Ovary (tissue), 10 donors: ENCODE measurements at regions of chr5 and their contacts with region 1.

Region 1: GRCh38 chr5:158701406-158702177 is 398.1 kb downstream of the EBF1 start:
- DNase-seq: peak in 1 of 5 donors; percentile 39
- H3K4me3 ChIP-seq: no peak overlapping the region
- H3K27ac ChIP-seq: no peak overlapping the region
- H3K4me1 ChIP-seq: peaks cover 3% of the 10 kb centered on the region
- H3K27me3 ChIP-seq: no peaks in the 10 kb centered on the region
- CTCF ChIP-seq: no peak
- EP300 ChIP-seq: no peak
- POLR2A ChIP-seq: no peak

Region 2: GRCh38 chr5:157820593-157821252 is 880.9 kb before region 1 on chr5:
- intact Hi-C with region 1: loop called in 1 of 4 experiments (anchors 10 kb)
- DNase-seq: peak in 1 of 5 donors; percentile 28
- H3K4me3 ChIP-seq: no peak overlapping the region
- H3K27ac ChIP-seq: peak overlapping the region in 1 of 2 donors; percentile 4
- H3K4me1 ChIP-seq: peaks cover 8% of the 10 kb centered on the region
- H3K27me3 ChIP-seq: no peaks in the 10 kb centered on the region
- CTCF ChIP-seq: peak; percentile 21 to 61 (median 43)
- EP300 ChIP-seq: no peak
- POLR2A ChIP-seq: no peak

Region 3: GRCh38 chr5:158074992-158075769 is 626.4 kb before region 1 on chr5:
- intact Hi-C with region 1: loop called in 1 of 4 experiments (anchors 10 kb)
- DNase-seq: peak; percentile 47 to 77 (median 69)
- H3K4me3 ChIP-seq: peak overlapping the region; percentile 32
- H3K27ac ChIP-seq: no peak overlapping the region
- H3K4me1 ChIP-seq: peaks cover 4% of the 10 kb centered on the region
- H3K27me3 ChIP-seq: no peaks in the 10 kb centered on the region
- CTCF ChIP-seq: peak; percentile 43 to 69 (median 65)
- EP300 ChIP-seq: no peak
- POLR2A ChIP-seq: no peak

Region 4: DNA sequence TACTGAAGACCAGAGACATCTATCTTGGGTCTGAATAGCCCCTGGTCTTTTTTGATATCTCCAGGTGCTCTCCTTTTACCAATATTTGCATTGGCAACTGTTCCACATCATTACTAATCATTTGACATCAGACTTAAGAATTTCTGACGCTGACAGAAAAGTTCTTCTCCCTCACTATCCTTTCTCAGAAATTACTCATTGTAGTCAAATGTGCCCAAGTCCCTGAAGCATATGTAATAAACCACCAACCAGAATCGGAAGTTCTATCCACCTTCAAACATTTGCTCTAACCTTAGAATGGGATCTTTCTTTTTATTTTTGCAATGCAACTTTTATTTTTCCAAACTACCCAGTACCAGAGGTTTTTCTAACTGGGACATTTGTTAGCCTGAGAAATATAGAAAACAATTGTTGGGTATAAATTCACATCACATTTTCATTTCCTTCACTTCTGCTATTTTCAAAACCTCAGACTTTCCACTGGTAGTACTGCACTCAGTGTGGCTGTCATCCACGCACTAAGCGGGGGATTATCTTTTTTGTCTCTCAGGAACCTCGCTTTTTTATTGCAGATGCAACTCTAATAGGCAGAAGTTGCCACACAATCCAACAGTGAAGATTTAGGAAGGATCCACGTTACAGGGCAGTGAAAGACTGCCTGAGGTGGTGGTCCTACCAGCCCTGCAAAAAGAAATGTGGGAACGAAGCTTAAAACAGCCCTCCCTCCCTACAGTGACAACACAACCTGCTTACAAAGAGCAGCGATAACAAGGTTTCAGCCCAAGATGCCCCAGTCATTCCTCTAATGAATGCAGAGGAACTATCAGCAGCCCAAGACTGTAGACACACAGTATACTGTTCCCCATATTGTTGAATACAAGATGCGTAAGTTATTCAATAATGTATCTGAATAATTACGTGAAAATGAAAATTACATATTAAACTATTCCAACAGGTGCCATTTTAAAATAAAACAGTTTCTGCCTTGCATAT is 196.9 kb after region 1 on chr5:
- intact Hi-C with region 1: loop called in 1 of 4 experiments (anchors 10 kb)
- DNase-seq: no peak
- H3K4me3 ChIP-seq: no peak overlapping the region
- H3K27ac ChIP-seq: no peak overlapping the region
- H3K4me1 ChIP-seq: peaks cover 10% of the 10 kb centered on the region
- H3K27me3 ChIP-seq: no peaks in the 10 kb centered on the region
- CTCF ChIP-seq: no peak
- EP300 ChIP-seq: no peak
- POLR2A ChIP-seq: no peak

Region 5: DNA sequence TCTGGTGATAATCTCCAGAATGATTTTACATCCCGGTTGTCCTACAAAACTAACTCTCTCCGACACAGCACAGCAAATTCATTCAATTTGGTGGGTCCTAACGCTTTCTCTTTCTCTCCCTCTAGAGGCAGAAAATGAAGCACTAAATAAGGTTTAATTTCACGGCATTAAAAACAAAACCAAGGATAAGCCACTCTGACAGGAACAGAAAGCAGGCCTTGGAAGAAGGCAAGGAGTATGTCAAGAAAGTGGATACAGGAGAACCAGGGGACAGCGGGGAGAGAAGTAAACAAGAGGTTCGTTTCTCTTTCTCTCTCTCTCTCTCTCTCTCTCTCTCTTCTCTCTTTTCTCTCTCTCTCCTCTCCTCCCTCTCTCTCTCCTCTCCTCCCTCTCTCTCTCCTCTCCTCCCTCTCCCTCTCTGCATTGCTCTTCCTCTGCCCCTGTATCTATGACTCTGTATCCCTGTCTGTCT is 348.3 kb after region 1 on chr5:
- intact Hi-C with region 1: loop called in 1 of 4 experiments (anchors 5 kb)
- DNase-seq: peak in 2 of 5 donors; percentile 22 to 33
- H3K4me3 ChIP-seq: no peak overlapping the region
- H3K27ac ChIP-seq: peak overlapping the region; percentile 44 to 76
- H3K4me1 ChIP-seq: peaks cover 10% of the 10 kb centered on the region
- H3K27me3 ChIP-seq: no peaks in the 10 kb centered on the region
- CTCF ChIP-seq: peak; percentile 41 to 76 (median 64)
- EP300 ChIP-seq: no peak
- POLR2A ChIP-seq: peak; percentile 14